Left cardiac atrium (tissue), 4 donors: ENCODE measurements at regions of chr1 and their contacts with region 1.

Region 1: DNA sequence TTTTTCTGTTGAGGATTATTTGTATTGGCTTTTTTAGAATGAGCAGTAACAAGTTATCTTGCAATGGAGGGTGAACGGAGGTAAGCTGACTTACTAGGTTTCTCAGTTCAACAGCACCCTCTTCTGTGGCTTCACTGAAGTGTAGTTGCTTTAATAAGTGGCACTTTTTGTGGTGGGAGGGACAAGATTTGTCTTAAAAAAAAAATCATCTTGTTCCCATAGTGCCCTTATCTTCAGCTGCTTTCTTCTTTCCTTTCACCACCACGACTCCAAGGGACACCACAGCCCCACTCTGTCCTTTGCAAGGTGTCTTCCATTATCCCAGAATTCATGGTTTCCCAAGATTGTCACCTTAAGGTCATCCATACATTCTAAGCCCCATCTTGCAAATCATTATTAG is 92.9 kb downstream of the PIGK start:
- DNase-seq: no peak
- ATAC-seq: peak; percentile 36 to 76

Region 2: GRCh38 chr1:76154206-76154956 is 971.9 kb before region 1 on chr1:
- intact Hi-C with region 1: loop called (anchors 2 to 10 kb)
- DNase-seq: peak; percentile 76
- ATAC-seq: peak; percentile 90 to 94

Region 3: GRCh38 chr1:76330991-76331603 is 795.2 kb before region 1 on chr1:
- intact Hi-C with region 1: loop called in 1 of 2 experiments (anchors 2 kb)
- DNase-seq: no peak
- ATAC-seq: peak; percentile 47 to 63